Activated CD4-positive, alpha-beta T cell treated with anti-CD3 and anti-CD28 coated beads, Interleukin-2, amount 10 ng/mL, durations not matched to agents 24 days and 14 days (primary cell): ENCODE measurements at regions of chr2 and their contacts with region 1.

Region 1: GRCh38 chr2:64523666-64524603 is at the start of gene AFTPH:
- DNase-seq: peak; percentile 100
- H3K4me3 Mint-ChIP-seq: peak within 1 kb of the TSS; percentile 97
- H3K27ac Mint-ChIP-seq: peak within 1 kb of the TSS; percentile 100
- H3K4me1 Mint-ChIP-seq: peaks cover 40% of the 10 kb centered on the region
- H3K27me3 Mint-ChIP-seq: peaks cover 8% of the 10 kb centered on the region
- total RNA-seq, gene AFTPH: 39.1 and 39.6 TPM in 2 replicates

Region 2: GRCh38 chr2:64214281-64215115 is 309.4 kb before region 1 on chr2:
- intact Hi-C with region 1: loop called (anchors 5 kb)
- DNase-seq: peak; percentile 80
- H3K4me3 Mint-ChIP-seq: peak overlapping the region; percentile 74
- H3K27ac Mint-ChIP-seq: peak overlapping the region; percentile 97
- H3K4me1 Mint-ChIP-seq: peaks cover 41% of the 10 kb centered on the region
- H3K27me3 Mint-ChIP-seq: no peaks in the 10 kb centered on the region

Region 3: DNA sequence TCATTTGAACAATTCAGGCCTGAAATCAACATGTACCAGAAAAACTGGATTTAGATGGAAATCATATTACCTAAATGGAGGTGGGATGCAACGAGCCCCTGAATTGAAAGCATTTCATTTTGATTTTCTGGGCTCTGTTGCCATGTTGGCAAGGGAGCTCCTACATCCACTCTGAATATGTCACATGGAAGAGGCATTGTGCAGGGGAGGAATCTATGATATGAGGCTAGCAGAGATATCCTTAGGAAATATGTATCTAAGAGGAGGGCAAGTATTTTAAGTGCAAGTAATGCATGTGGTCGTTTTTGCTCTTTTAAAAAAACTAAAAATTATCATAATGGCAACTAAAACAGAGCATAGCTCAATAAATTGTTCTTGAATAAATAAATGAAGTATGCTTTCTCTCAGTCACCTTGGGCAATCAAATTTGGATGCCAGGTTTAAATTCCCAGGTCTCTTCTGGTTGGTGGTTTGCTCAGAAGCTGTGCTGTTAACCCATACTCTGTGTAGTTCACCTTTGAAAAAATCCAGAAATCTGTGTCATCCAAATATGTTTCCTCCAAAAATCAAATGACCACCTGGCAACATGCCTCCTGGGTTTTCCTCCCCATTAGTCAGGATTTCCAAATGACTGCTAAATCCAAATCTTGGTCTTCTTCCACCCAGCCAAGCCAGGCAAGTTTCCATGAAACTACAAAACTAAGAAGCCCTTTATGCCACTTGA is 76.5 kb before region 1 on chr2:
- intact Hi-C with region 1: no loop called
- DNase-seq: no peak
- H3K4me3 Mint-ChIP-seq: no peak overlapping the region
- H3K27ac Mint-ChIP-seq: no peak overlapping the region
- H3K4me1 Mint-ChIP-seq: no peaks in the 10 kb centered on the region
- H3K27me3 Mint-ChIP-seq: peaks cover 55% of the 10 kb centered on the region

Region 4: DNA sequence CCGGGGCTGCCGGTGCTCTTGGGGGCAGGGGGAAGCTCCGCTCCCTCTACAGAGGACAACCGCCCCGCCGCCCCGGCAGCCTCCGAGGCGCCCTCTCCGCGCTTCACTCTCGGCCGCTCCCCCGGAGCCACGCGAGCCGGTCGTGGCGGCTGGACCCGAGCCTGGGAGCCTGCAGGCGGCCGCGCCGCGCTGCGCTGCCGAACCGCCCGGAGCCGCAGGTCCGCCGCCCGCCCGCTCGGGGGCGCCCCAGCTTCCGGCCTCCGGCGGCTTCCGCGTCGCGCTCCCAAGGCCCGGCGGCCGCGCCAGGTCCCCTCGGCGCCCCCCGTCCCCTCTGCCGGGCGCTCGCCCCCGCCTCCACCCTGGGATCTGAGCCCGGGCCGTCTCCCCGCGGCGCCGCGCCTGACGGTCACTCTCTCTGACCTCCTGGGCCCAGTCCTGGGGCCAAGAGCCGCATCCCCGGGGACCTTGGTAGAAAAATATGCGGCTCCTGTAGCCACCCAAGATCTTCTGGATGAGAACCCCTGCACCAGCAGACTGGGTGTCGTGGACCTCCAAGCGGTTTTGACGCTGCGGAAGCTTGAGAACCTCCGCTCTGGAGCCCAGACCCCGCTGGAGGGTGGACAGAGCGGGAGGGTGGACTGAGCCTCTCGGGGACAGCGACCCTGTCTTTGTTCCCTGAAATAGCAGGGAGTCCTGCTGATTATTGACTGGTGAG is 85.4 kb after region 1 on chr2:
- intact Hi-C with region 1: loop called (anchors 1 kb)
- DNase-seq: peak; percentile 93
- H3K4me3 Mint-ChIP-seq: peak overlapping the region; percentile 76
- H3K27ac Mint-ChIP-seq: peak overlapping the region; percentile 74
- H3K4me1 Mint-ChIP-seq: peaks cover 24% of the 10 kb centered on the region
- H3K27me3 Mint-ChIP-seq: peaks cover 20% of the 10 kb centered on the region

Region 5: GRCh38 chr2:64737547-64737946 is 213.6 kb after region 1 on chr2:
- intact Hi-C with region 1: loop called (anchors 5 kb)
- DNase-seq: peak; percentile 73
- H3K4me3 Mint-ChIP-seq: peak overlapping the region; percentile 72
- H3K27ac Mint-ChIP-seq: peak overlapping the region; percentile 77
- H3K4me1 Mint-ChIP-seq: peaks cover 30% of the 10 kb centered on the region
- H3K27me3 Mint-ChIP-seq: no peaks in the 10 kb centered on the region

Region 6: DNA sequence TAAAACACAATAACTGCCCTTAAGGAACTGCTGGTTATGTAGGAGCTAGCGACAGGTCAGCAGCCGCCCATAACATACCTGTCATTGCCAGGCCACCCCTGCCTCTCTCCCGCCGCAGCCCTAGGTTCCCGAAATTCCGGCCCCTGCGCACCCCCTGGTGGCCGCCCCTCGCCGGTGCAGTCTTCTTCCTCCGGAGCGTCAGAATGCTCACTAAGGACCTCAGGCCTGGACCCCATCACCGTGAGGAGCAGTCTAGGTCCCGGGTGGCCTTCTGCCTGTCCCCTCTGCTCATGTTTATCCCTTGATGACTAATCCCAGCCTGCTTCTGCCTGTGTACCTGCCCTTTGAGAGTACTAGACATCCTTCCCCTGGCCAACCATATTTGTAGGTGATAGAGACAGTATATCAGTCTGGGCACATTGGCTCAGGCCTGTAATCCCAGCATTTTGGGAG is 349.6 kb after region 1 on chr2:
- intact Hi-C with region 1: loop called (anchors 1 kb)
- DNase-seq: peak; percentile 95
- H3K4me3 Mint-ChIP-seq: no peak overlapping the region
- H3K27ac Mint-ChIP-seq: no peak overlapping the region
- H3K4me1 Mint-ChIP-seq: peaks cover 11% of the 10 kb centered on the region
- H3K27me3 Mint-ChIP-seq: peaks cover 24% of the 10 kb centered on the region

Region 7: DNA sequence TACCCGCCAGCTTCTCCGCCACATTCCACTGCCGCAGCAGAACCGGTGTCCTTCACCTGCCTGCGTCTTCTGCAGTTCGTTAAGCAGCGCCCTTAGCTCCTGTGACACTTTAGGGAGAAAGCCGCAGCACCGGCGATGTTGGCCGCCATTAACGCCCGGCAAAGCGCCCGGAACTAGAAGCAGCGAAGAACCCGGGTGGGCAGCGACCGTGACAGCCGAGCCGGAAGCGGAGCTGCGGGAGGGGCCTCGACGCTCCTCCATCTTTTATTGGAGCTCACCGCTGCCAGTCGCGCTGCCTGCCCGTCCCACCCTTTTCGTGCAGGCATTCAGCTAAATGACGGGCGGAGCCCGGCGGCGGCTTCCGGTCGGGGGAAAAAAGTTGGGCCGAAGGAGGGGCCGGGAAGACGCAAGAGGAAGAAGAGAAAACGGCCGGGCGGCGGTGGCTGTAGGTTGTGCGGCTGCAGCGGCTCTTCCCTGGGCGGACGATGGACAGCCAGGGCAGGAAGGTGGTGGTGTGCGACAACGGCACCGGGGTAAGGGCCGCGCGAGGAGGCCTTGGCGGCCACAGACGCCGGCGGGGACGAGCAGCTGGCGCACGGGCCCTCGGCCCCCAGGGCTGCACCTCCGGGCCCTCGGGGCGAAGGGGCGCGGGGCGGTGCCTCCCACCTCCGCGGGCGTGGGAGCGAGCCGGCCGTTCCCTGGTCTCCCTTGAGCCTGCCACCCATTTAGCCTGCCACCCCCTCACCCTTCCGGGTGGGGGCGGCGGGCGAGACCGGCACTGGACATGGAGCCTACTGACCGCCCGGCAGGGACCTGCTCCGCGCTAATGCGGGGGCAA is 703.7 kb after region 1 on chr2 and contains the start of gene ACTR2:
- intact Hi-C with region 1: loop called (anchors 10 kb)
- DNase-seq: peak; percentile 99
- H3K4me3 Mint-ChIP-seq: peak within 1 kb of the TSS; percentile 97
- H3K27ac Mint-ChIP-seq: peak within 1 kb of the TSS; percentile 98
- H3K4me1 Mint-ChIP-seq: peaks cover 28% of the 10 kb centered on the region
- H3K27me3 Mint-ChIP-seq: peaks cover 1% of the 10 kb centered on the region
- total RNA-seq, gene ACTR2: 298 TPM in 2 replicates